ENCODE measurements at regions of chr21 and their contacts with region 1.

Region 1: GRCh38 chr21:17393413-17393812 is 119.4 kb upstream of the CXADR start:
- DNase-seq: no peak
- ATAC-seq: no peak
- H3K4me3 ChIP-seq: no peak overlapping the region
- H3K27ac ChIP-seq: no peak overlapping the region
- H3K4me1 ChIP-seq: no peaks in the 10 kb centered on the region
- H3K27me3 ChIP-seq: no peaks in the 10 kb centered on the region
- CTCF ChIP-seq: no peak

Region 2: GRCh38 chr21:17352937-17353655 is 40.3 kb before region 1 on chr21:
- intact Hi-C with region 1: no loop called
- DNase-seq: no peak
- ATAC-seq: no peak
- H3K4me3 ChIP-seq: no peak overlapping the region
- H3K27ac ChIP-seq: no peak overlapping the region
- H3K4me1 ChIP-seq: no peaks in the 10 kb centered on the region
- H3K27me3 ChIP-seq: no peaks in the 10 kb centered on the region
- CTCF ChIP-seq: no peak

Region 3: DNA sequence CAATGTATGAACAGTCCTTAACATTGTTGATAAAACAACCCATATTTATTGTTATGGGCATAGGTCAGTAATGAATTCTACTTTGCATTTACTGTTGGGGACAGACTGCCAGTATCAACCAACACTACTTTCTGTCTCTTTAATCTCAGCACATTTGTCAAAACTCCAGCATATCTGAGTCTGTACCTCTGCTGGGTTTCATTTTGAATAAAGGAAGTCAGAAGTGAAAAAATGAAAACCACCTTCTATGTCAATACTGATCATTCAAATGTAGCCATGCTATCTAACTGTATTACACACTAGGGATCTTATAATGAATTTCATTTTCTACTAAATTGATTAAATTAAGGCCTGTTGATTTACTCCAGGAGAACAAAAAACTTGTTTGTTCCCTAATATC is 95.2 kb after region 1 on chr21:
- intact Hi-C with region 1: no loop called
- DNase-seq: no peak
- ATAC-seq: no peak
- H3K4me3 ChIP-seq: no peak overlapping the region
- H3K27ac ChIP-seq: no peak overlapping the region
- H3K4me1 ChIP-seq: no peaks in the 10 kb centered on the region
- H3K27me3 ChIP-seq: no peaks in the 10 kb centered on the region
- CTCF ChIP-seq: no peak

Region 4: GRCh38 chr21:17580319-17580718 is 186.9 kb after region 1 on chr21:
- intact Hi-C with region 1: loop called (anchors 5 to 10 kb)
- DNase-seq: no peak
- ATAC-seq: no peak
- H3K4me3 ChIP-seq: no peak overlapping the region
- H3K27ac ChIP-seq: no peak overlapping the region
- H3K4me1 ChIP-seq: no peaks in the 10 kb centered on the region
- H3K27me3 ChIP-seq: no peaks in the 10 kb centered on the region
- CTCF ChIP-seq: no peak